ENCODE measurements at regions of chr12 and their contacts with region 1.

Region 1: DNA sequence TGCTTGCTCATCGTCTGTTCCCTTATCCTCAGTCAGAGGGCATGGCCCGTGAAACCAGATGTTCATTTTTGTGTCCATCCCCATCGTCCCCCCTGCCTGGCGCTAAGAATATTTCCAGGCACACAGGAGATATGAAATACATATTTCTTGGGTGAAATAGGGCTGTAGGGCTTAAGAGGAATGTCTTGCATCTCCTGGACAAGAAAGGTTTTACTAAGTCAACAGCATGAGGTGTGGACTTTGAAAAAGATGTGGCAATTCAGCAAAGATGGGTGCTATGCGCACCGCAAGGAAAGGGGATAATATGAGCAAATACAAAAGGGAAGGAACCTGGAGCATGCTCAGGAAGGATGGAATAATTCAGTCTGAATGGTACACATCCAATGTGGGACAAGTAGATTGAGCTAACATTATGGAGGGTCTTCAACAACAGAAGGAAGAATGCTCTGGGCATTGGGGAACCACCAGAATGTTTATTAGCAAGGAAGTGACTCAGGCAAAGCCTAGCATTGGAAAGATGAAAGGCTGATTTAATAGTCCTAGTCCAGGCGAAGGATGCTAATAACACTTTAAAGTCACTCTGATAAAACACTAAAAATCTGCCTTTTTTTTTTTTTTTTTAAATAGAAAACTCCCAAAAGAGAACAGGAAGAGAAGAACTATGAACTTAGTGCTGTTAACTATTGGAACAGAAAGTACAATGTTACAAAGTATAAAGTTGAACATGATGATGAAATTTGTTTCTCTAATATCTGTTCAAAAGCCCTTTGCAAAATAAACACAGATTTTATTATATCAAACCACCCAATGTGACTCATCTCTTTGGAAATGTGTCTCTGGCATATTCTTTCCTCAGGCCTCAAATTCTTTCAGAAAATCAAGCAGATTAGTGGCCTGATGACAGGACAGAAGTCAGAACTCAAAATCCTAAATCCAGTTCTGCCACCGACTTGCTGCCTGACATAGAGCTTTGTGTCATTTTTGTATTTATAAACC is 449.5 kb downstream of the BCAT1 start:
- DNase-seq: no peak
- H3K4me3 ChIP-seq: peak overlapping the region in 1 of 2 donors; percentile 13
- H3K27ac ChIP-seq: peak overlapping the region; percentile 60 to 67
- H3K4me1 ChIP-seq: peaks cover 0 to 65% (median 21%) of the 10 kb centered on the region in 4 donors
- H3K27me3 ChIP-seq: no peaks in the 10 kb centered on the region
- CTCF ChIP-seq: no peak

Region 2: DNA sequence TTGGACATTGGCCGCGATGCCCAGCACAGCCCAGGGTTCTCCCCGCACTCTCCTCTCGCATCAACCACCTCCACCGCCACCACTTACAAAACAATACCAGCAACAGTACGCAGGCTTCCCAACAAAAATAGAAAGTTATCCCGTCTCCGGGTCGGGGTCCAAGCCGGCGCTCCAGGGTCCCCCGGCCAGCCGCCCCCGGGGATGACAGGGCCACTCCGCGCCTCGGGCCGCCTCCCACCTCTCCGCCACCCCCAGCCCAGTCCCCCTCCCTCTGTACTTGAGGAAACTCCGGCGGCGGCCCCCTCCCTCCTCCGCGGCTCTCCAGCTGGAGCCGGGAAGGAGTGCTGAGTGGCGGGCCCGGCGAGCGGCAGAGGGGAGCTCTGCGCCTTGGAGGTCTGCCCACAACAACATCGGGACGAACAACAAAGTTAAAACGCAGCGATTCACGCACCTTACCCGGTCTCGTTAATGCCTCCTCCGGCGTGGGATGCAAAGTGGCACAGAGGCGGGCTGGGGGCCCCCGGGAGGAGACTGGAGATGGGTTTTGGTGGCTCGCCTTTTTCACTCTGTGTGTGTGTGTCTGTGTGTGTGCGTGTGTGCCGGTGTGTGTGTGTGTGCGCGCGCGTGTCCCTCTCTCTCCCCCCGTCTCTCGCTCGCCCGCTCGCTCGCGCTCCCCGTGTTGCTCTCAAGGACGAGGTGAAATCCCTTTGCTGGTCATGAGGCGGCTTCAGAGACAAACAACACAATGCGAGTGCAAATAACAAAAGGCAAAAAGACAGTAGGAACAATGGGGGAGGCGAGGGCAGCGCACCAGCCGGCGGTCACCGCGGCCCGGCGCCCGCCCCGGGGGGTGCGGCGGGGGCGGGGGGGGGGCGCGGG is 62.7 kb after region 1 on chr12:
- intact Hi-C with region 1: loop called (anchors 10 kb)
- DNase-seq: peak; percentile 75 to 88
- H3K4me3 ChIP-seq: peak overlapping the region; percentile 69 to 77
- H3K27ac ChIP-seq: peak overlapping the region; percentile 92 to 93
- H3K4me1 ChIP-seq: peaks cover 0 to 38% (median 7%) of the 10 kb centered on the region in 4 donors
- H3K27me3 ChIP-seq: no peaks in the 10 kb centered on the region
- CTCF ChIP-seq: no peak

Measured in tibial artery (tissue), 4 donors.